Dorsolateral prefrontal cortex (tissue), 120 donors: ENCODE measurements at regions of chr13 and their contacts with region 1.

Region 1: GRCh38 chr13:53074114-53074513 is 45.5 kb downstream of the OLFM4 start:
- DNase-seq: no peak
- H3K4me3 ChIP-seq: no peak overlapping the region
- H3K27ac ChIP-seq: peak overlapping the region in 55 of 59 donors; percentile 30 to 91 (median 77)
- H3K27me3 ChIP-seq: no peaks in the 10 kb centered on the region
- CTCF ChIP-seq: no peak

Region 2: GRCh38 chr13:52955472-52955874 is 118.6 kb before region 1 on chr13:
- intact Hi-C with region 1: no loop called
- DNase-seq: no peak
- H3K4me3 ChIP-seq: no peak overlapping the region
- H3K27ac ChIP-seq: no peak overlapping the region
- H3K27me3 ChIP-seq: no peaks in the 10 kb centered on the region
- CTCF ChIP-seq: no peak

Region 3: DNA sequence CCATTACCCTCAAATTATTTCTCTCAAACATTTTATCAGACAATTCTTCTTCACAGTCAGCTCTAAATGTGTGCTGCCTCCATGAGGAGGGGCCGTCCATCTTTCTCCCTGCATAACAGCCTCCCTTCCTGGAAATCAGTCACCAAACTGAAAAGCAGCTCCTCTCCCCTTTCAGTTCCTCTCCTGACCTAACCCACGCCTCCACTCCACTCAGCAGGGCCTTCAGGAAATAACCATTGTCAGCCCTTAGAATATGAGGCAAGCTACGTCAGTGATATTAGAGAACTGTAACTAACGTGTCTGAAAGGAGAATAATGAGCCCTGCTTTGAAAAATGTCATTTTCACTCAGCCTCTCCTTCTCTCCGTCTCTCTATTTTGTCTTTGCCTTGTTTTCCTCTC is 70.7 kb after region 1 on chr13:
- intact Hi-C with region 1: loop called in 1 of 2 experiments (anchors 5 kb)
- DNase-seq: no peak
- H3K4me3 ChIP-seq: no peak overlapping the region
- H3K27ac ChIP-seq: no peak overlapping the region
- H3K27me3 ChIP-seq: peaks cover 0 to 8% (median 0%) of the 10 kb centered on the region in 45 donors
- CTCF ChIP-seq: no peak